Common myeloid progenitor, CD34-positive (primary cell): ENCODE measurements at regions of chr13 and their contacts with region 1.

Region 1: DNA sequence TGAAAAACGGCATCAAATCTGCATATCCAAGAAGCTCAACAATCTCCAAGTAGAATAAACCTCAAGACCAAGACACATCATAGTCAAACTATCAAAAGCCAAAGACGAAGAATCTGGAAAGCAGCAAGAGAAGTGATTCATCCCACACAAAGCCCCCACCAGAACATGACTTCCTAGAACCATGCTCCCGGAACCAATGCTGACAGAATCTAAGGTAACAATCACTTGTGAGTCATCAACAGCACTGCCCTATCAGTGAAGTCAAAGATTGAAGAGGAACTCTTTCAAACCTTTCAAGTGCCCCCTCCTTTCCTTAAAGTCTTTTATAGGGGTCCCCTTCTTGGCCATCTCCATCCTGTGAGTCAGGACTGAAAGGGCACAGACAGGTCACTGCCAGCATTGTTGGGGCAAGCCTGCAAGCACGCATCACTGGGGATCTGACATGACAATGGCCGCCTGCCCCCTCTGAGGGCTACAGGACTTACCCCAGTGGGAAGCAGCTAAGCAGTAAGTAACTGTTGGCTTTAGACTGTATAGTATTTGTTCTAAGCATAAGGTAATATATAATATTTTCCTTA is at the start of gene CCDC70:
- DNase-seq: peak in 1 of 3 donors; percentile 34
- H3K4me3 ChIP-seq: no peak within 1 kb of the TSS
- H3K27ac ChIP-seq: no peak within 1 kb of the TSS
- H3K4me1 ChIP-seq: peaks cover 2 to 18% (median 9%) of the 10 kb centered on the region in 4 experiments
- H3K27me3 ChIP-seq: no peaks in the 10 kb centered on the region

Region 2: GRCh38 chr13:51844862-51845573 is 16.8 kb before region 1 on chr13 and contains the start of gene TMEM272:
- CTCF ChIA-PET with region 1: interaction called, 24 read pairs
- POLR2A ChIA-PET with region 1: no interaction called
- DNase-seq: peak; percentile 37 to 50 (median 45)
- H3K4me3 ChIP-seq: peak within 1 kb of the TSS in 5 of 7 experiments; percentile 3 to 73 (median 58)
- H3K27ac ChIP-seq: no peak within 1 kb of the TSS
- H3K4me1 ChIP-seq: peaks cover 0 to 18% (median 5%) of the 10 kb centered on the region in 4 experiments
- H3K27me3 ChIP-seq: no peaks in the 10 kb centered on the region

Region 3: GRCh38 chr13:51874651-51875050 is 12.8 kb after region 1 on chr13:
- CTCF ChIA-PET with region 1: interaction called, 14 read pairs
- POLR2A ChIA-PET with region 1: interaction called, 4 read pairs
- DNase-seq: no peak
- H3K4me3 ChIP-seq: no peak overlapping the region
- H3K27ac ChIP-seq: no peak overlapping the region
- H3K4me1 ChIP-seq: peaks cover 0 to 10% (median 0%) of the 10 kb centered on the region in 4 experiments
- H3K27me3 ChIP-seq: no peaks in the 10 kb centered on the region